Activated CD4-positive, alpha-beta T cell treated with anti-CD3 and anti-CD28 coated beads, Interleukin-2, amount 10 ng/mL, durations not matched to agents 7 days and 5 days (primary cell): ENCODE measurements at regions of chr1 and their contacts with region 1.

Region 1: GRCh38 chr1:84620720-84621313 is 46.6 kb upstream of the CTBS start:
- DNase-seq: peak; percentile 74
- H3K4me3 Mint-ChIP-seq: peak overlapping the region; percentile 84
- H3K27ac Mint-ChIP-seq: peak overlapping the region; percentile 88
- H3K4me1 Mint-ChIP-seq: peaks cover 18% of the 10 kb centered on the region
- H3K27me3 Mint-ChIP-seq: no peaks in the 10 kb centered on the region

Region 2: GRCh38 chr1:84442256-84442655 is 178.6 kb before region 1 on chr1:
- CTCF ChIA-PET with region 1: interaction called, 12 read pairs
- POLR2A ChIA-PET with region 1: no interaction called
- DNase-seq: peak; percentile 59
- H3K4me3 Mint-ChIP-seq: peak overlapping the region; percentile 10
- H3K27ac Mint-ChIP-seq: peak overlapping the region; percentile 85
- H3K4me1 Mint-ChIP-seq: peaks cover 30% of the 10 kb centered on the region
- H3K27me3 Mint-ChIP-seq: peaks cover 13% of the 10 kb centered on the region

Region 3: GRCh38 chr1:84606977-84607376 is 13.8 kb before region 1 on chr1:
- CTCF ChIA-PET with region 1: interaction called, 12 read pairs
- POLR2A ChIA-PET with region 1: no interaction called
- DNase-seq: no peak
- H3K4me3 Mint-ChIP-seq: no peak overlapping the region
- H3K27ac Mint-ChIP-seq: no peak overlapping the region
- H3K4me1 Mint-ChIP-seq: no peaks in the 10 kb centered on the region
- H3K27me3 Mint-ChIP-seq: no peaks in the 10 kb centered on the region